Lower leg skin (tissue), 4 donors: ENCODE measurements at regions of chr9 and their contacts with region 1.

Region 1: DNA sequence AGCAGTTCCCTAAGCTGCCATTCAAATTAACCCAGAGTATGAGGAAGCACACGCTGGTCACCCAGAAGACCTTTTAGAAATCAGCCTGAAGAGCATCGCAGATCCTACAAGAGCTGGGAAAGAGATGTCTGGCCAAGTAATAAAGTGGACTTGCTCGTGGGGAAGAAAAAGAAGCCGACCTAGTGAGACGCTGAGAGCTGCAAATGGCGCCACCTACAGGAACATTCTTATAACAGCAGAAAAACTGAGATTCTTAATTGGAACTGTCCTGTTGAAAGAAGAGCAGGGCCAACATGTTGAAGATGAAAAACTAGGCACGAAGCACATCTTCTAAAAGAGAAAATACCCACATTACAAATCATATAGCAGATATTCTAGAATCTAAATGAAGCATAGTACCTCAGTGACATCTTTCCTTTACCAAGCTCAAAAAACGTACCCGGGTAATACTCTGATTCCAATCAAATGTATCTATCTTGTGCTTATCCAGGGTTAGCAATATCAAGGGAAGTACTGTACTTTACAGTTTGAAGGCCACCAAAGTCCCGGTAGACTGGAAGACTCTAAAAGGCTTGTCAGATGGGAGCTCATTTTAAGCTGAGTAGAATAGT is 3.9 kb upstream of the GNAQ start:
- DNase-seq: peak in 1 of 2 donors; percentile 63
- H3K4me3 ChIP-seq: no peak overlapping the region
- CTCF ChIP-seq: no peak
- POLR2A ChIP-seq: no peak

Region 2: GRCh38 chr9:77177161-77177893 is 858.2 kb before region 1 on chr9 and contains the start of gene VPS13A:
- intact Hi-C with region 1: loop called (anchors 5 kb)
- DNase-seq: peak; percentile 87 to 99
- H3K4me3 ChIP-seq: peak within 1 kb of the TSS; percentile 75
- CTCF ChIP-seq: peak in 1 of 3 donors; percentile 10
- POLR2A ChIP-seq: no peak
- total RNA-seq, gene VPS13A: 27.0 to 48.1 (median 32.5) TPM

Region 3: GRCh38 chr9:77464661-77465060 is 570.8 kb before region 1 on chr9:
- intact Hi-C with region 1: loop called (anchors 5 kb)
- DNase-seq: no peak
- H3K4me3 ChIP-seq: no peak overlapping the region
- CTCF ChIP-seq: no peak
- POLR2A ChIP-seq: no peak

Region 4: DNA sequence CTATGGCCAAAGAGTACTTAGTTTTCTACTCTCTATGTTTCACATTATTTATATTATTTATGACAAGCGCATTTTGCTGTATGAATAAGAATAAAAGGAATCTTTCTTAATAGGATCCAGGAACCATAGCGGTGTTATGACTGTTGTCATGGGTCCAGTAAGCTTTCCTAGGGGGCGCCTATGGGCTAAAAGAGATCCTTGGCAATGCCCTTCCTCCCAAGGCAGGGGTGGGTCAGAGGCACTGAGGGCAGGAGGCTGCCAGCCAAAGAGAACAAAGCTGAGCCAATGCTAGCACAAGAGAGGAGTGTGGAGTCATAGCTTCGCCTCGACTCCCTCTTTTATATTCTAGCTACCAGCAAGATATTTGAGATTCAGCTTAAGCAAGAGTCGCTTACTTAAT is 94.5 kb after region 1 on chr9:
- intact Hi-C with region 1: no loop called
- DNase-seq: no peak
- H3K4me3 ChIP-seq: no peak overlapping the region
- CTCF ChIP-seq: no peak
- POLR2A ChIP-seq: no peak

Region 5: DNA sequence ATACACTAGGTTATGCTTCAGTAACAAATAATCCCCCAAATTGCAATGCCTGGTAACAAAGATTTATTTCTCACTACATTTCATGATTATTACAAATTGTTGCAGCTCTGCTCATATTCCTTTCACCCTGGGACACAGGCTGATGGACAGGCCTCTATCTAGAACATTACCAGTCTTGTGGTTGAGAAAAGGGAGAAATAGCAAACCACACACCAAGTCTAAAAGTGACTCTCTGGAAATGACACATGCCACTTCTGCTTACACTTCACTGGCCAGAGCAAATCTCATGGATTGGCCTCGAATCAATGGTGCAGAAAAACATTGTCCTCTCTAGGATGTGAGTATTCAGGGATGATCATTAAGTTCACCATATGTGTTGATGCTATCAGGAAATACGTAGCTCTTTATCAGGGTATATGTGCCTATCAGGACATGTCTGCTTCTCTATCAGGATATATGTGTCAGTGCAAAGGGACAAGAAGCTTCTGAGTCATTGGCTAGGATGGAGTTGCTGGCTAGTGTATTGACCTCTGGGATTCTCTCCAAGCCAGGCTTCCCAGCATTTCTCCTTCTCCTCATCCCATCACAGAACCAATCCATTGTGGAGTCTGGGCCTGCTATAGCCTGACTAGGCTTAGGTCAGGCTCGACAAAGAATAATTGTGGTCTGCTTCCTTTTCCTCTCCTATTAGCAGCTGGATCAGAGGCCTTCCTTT is 109.3 kb after region 1 on chr9:
- intact Hi-C with region 1: no loop called
- DNase-seq: no peak
- H3K4me3 ChIP-seq: no peak overlapping the region
- CTCF ChIP-seq: no peak
- POLR2A ChIP-seq: no peak

Region 6: GRCh38 chr9:78296893-78297671 is 261.6 kb after region 1 on chr9 and contains the start of gene PSAT1:
- intact Hi-C with region 1: no loop called
- DNase-seq: peak; percentile 73 to 94
- H3K4me3 ChIP-seq: peak within 1 kb of the TSS; percentile 58
- CTCF ChIP-seq: no peak
- POLR2A ChIP-seq: no peak
- total RNA-seq, gene PSAT1: 50.2 to 106 (median 75.3) TPM